Right ventricle myocardium superior (tissue), 1 donor: ENCODE measurements at regions of chr5 and their contacts with region 1.

Region 1: DNA sequence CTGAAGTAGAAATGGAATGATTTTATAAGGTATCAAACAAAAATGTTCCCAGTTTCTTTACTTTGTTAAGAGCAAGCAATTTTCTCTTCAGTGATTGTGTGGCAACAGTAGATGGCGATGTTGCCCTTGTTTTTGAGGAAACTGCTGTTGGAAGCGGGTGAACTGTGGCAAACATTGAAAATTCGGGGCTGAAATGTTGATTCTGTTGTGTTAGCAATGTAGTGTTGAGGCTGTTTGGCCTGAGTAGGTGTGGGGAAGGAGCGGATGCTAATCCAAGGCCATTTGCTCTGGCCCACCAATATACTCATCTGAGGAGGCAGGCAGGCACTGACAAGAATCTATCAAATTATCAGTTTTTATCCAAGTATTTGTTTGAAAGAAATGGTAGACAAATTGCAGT is 129.8 kb downstream of the SLC12A2 start:
- DNase-seq: no peak
- ATAC-seq: peak; percentile 38

Region 2: DNA sequence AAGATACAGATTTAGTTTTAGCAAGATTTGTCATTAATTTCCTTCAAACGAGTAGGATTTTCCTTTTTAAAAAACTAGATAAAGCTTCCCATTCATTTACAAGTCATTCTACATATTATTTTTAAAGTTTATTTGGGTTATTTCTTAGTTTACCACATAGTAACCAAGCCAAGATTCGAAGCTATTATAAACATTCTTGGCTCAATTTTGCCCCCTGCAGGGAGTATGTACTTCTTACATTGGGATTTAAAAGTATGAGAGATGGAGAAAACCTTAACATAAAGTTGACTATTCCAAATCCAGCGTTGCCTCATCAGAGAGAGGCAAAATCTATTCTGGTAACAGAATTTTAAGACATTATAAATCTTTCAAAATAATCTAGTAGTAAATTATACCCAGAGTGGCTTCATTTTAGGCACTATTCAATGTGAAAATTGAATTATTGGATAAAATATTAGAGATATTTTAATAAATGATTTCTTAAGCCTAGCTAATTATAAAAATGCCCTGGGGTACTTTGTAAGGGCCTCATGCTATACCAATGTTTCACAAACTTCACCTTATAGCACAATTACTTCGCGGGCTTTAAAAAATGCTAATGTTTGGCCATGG is 285.6 kb after region 1 on chr5:
- intact Hi-C with region 1: loop called (anchors 2 kb)
- DNase-seq: no peak
- ATAC-seq: peak; percentile 65

Region 3: GRCh38 chr5:128857076-128857677 is 643.8 kb after region 1 on chr5:
- intact Hi-C with region 1: loop called (anchors 10 kb)
- DNase-seq: no peak
- ATAC-seq: peak; percentile 87